ENCODE measurements at regions of chr4 and their contacts with region 1.

Region 1: GRCh38 chr4:10074767-10075105 is 41.9 kb downstream of the WDR1 start:
- DNase-seq: peak in 3 of 14 experiments; percentile 18 to 34 (median 32)
- ATAC-seq: peak; percentile 61
- H3K4me3 ChIP-seq: no peak overlapping the region
- H3K4me3 Mint-ChIP-seq: no peak overlapping the region
- H3K27ac ChIP-seq: no peak overlapping the region
- H3K27ac Mint-ChIP-seq: peak overlapping the region; percentile 60
- H3K4me1 ChIP-seq: no peaks in the 10 kb centered on the region
- H3K4me1 Mint-ChIP-seq: no peaks in the 10 kb centered on the region
- H3K27me3 ChIP-seq: no peaks in the 10 kb centered on the region
- H3K27me3 Mint-ChIP-seq: no peaks in the 10 kb centered on the region
- CTCF ChIP-seq: peak; percentile 45

Region 2: DNA sequence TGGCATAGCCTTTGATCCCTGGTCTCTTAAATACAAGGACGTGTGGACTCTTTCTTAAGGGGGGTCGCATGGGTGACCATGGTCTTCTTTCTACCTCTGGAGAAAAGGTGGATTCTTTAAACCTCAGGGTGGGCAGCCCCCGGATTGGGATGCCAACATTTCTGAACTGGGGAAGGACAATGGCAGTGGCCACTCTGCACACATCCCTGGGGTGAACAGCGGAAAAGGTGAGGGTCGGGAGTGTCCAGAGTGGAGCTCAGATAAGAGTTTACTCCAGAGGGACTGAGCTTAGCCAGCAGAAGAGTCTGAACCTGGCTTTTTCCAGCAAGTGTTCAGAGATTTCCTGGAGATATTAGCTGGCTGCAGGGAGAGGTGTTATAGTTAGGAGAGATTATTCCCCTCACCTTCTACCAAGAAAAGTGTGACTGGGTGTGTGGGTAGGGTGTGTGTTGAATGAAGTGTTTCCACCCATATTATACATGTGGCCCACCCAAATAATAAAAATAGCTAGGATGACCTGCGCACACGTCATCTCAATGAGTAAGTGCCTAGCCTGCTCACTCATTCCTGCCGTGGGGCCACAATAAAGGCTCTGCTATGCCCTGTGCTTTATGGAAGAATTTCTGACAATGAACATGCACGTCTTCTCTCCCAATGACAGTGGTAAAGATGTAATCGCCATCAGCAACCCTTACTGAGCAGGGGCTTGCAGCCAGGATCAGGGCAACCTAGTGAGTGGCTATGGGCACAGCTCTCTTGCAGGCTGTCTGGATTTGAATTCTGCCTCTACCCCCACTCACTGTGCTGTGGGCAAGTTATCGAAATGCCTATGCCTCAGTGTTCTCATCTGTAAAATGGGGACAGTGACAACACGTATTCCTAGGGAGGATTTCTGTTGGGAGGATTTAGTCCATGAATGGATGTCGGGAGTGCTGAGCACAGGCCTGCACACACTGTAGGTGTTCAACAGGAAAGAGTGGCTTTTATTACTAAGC is 130.0 kb before region 1 on chr4:
- CTCF ChIA-PET with region 1: no interaction called
- POLR2A ChIA-PET with region 1: no interaction called
- intact Hi-C with region 1: no loop called
- DNase-seq: no peak
- ATAC-seq: no peak
- H3K4me3 ChIP-seq: no peak overlapping the region
- H3K4me3 Mint-ChIP-seq: no peak overlapping the region
- H3K27ac ChIP-seq: no peak overlapping the region
- H3K27ac Mint-ChIP-seq: no peak overlapping the region
- H3K4me1 ChIP-seq: no peaks in the 10 kb centered on the region
- H3K4me1 Mint-ChIP-seq: no peaks in the 10 kb centered on the region
- H3K27me3 ChIP-seq: no peaks in the 10 kb centered on the region
- H3K27me3 Mint-ChIP-seq: no peaks in the 10 kb centered on the region
- CTCF ChIP-seq: no peak

Region 3: GRCh38 chr4:10045481-10045880 is 29.3 kb before region 1 on chr4:
- CTCF ChIA-PET with region 1: no interaction called
- POLR2A ChIA-PET with region 1: no interaction called
- intact Hi-C with region 1: no loop called
- DNase-seq: no peak
- ATAC-seq: no peak
- H3K4me3 ChIP-seq: no peak overlapping the region
- H3K4me3 Mint-ChIP-seq: no peak overlapping the region
- H3K27ac ChIP-seq: no peak overlapping the region
- H3K27ac Mint-ChIP-seq: no peak overlapping the region
- H3K4me1 ChIP-seq: no peaks in the 10 kb centered on the region
- H3K4me1 Mint-ChIP-seq: no peaks in the 10 kb centered on the region
- H3K27me3 ChIP-seq: no peaks in the 10 kb centered on the region
- H3K27me3 Mint-ChIP-seq: no peaks in the 10 kb centered on the region
- CTCF ChIP-seq: no peak

Region 4: GRCh38 chr4:10253755-10254154 is 179.0 kb after region 1 on chr4:
- CTCF ChIA-PET with region 1: no interaction called
- POLR2A ChIA-PET with region 1: no interaction called
- intact Hi-C with region 1: loop called in 1 of 2 experiments (anchors 10 kb)
- DNase-seq: no peak
- ATAC-seq: no peak
- H3K4me3 ChIP-seq: no peak overlapping the region
- H3K4me3 Mint-ChIP-seq: no peak overlapping the region
- H3K27ac ChIP-seq: no peak overlapping the region
- H3K27ac Mint-ChIP-seq: no peak overlapping the region
- H3K4me1 ChIP-seq: no peaks in the 10 kb centered on the region
- H3K4me1 Mint-ChIP-seq: no peaks in the 10 kb centered on the region
- H3K27me3 ChIP-seq: no peaks in the 10 kb centered on the region
- H3K27me3 Mint-ChIP-seq: peaks cover 18% of the 10 kb centered on the region
- CTCF ChIP-seq: no peak

Measured in CD4-positive, alpha-beta T cell (primary cell).